ENCODE measurements at regions of chr22 and their contacts with region 1.

Region 1: DNA sequence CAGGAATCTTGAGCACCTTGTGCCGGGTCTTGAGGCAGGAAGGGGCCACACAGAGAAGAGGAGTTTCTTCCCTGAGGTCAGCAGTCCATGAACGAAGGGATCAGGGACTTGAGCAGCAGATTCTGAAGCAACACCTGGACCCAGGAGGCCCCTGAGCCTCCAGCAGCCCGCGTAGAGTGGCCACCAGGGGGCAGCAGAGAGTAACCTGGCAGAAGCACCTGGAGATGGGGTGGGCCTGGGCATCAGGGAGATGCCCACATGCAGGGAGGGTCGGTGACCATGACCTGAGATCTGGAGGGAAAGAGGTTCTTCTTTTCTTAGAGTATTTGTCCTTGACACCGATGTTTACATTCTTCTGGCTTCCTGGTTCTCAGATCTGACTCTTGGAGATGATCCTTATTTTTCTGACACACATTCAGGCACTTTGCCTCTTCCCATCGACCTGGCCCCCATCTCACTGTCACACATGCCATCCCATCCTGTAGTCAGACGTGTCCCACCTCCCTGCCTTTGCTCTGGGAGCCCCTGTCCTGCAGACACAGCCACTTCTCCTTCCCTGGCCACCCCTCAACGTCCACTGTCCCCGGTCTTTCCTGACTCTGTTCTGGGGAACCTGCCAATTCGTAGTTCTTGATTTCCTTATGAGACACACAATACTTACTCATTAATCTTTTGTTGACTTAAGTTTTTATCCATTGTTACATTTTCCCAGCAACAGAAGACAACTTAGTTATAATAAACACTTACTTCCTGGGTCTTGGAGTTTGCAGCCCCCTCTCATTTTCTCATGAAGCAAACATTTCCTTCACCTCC is 66.5 kb downstream of the GGTLC2 start:
- DNase-seq: no peak
- ATAC-seq: peak; percentile 96
- H3K4me3 ChIP-seq: no peak overlapping the region
- H3K27ac ChIP-seq: no peak overlapping the region
- H3K4me1 ChIP-seq: no peaks in the 10 kb centered on the region
- H3K27me3 ChIP-seq: no peaks in the 10 kb centered on the region
- CTCF ChIP-seq: peak; percentile 61 to 98 (median 97); a peak in 5 of 6 replicates
- POLR2A ChIP-seq: no peak
- RAD21 ChIP-seq: peak; percentile 34; the same call in 1 of the 2 replicates

Region 2: GRCh38 chr22:22692707-22693530 is 18.0 kb before region 1 on chr22:
- CTCF ChIA-PET with region 1: interaction called, 20 read pairs
- POLR2A ChIA-PET with region 1: no interaction called
- RAD21 ChIA-PET with region 1: no interaction called
- intact Hi-C with region 1: no loop called
- DNase-seq: no peak
- ATAC-seq: peak; percentile 99
- H3K4me3 ChIP-seq: peak overlapping the region in 1 of 2 experiments; percentile 36; a peak in 2 of 4 replicates
- H3K27ac ChIP-seq: no peak overlapping the region
- H3K4me1 ChIP-seq: peaks cover 10 to 24% of the 10 kb centered on the region in 2 experiments; a peak in 3 of 4 replicates
- H3K27me3 ChIP-seq: no peaks in the 10 kb centered on the region
- CTCF ChIP-seq: peak; percentile 69 to 98 (median 96); a peak in 5 of 6 replicates
- POLR2A ChIP-seq: no peak
- RAD21 ChIP-seq: peak; percentile 42

Region 3: DNA sequence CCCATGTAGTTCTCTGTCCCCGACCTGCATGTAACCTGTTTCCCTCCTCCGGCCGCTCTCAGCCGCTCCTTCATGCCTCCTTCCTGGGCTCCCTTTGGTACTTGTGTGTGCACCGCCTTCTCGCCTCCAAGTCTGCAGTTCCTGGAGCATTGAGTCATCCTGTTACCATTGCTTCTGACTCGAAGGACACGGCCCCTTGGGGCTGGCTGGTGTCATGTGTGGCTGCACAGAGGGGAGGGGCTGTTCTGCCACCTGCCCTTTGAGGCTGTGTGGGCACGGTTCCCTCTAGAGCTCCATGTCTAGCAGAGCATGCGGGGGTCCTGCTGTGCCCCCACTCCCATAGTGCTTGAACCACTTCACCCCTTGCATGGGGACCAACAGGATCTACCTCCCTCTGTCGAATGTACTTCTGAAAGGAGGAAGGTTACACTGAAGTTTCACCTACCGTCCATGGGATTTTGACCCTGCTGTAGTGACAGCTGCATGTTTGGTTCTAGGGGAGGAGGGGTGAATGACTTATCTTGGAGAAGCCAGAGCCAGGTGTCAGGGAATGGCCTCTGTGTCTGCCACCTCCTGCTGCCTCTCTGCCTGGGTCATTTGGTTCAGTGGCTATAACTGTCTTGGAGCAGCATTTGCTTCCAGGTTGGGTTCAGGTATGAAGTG is 509.0 kb after region 1 on chr22:
- CTCF ChIA-PET with region 1: no interaction called
- POLR2A ChIA-PET with region 1: no interaction called
- RAD21 ChIA-PET with region 1: no interaction called
- intact Hi-C with region 1: no loop called
- DNase-seq: no peak
- ATAC-seq: peak; percentile 38
- H3K4me3 ChIP-seq: no peak overlapping the region
- H3K27ac ChIP-seq: no peak overlapping the region
- H3K4me1 ChIP-seq: peaks cover 16 to 34% of the 10 kb centered on the region in 2 experiments
- H3K27me3 ChIP-seq: no peaks in the 10 kb centered on the region
- CTCF ChIP-seq: no peak
- POLR2A ChIP-seq: no peak
- RAD21 ChIP-seq: no peak

Measured in HCT116 (cell line).